T-cell (primary cell): ENCODE measurements at regions of chr1 and their contacts with region 1.

Region 1: DNA sequence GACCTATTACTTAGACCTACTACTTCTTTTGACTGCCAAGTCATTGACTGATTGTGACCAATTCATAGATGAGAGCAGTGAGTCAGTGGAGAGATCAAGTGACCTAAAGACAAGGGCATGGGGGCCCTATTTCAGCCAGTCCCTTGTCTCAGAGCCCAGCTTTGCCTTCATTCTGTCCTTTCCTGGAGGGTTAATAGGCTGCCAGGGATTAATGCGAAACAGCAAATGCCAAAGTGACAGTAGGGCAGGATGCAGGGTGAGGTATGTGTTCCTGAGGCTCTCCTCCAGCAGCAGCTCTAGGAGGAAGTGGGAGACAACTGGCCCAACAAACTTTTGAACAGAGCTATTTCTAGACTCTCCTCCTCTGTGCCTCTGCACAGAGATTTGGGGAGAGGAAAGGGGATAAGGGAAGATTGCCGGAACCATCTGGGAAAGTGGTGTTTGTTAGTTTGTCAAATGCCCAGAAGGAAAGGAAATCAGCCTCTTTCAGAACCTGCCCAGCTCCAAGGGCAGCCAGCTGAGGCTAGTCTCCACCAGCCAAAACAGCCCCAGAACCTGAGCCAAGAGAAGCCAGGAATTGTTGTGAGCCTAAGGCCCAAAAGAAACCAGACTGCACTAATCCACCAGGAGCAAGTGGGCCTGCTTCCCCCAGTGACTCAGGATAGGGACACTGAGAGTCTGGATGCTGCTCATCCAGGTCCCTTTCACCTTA is 4.9 kb upstream of the S100A3 start:
- DNase-seq: no peak
- ATAC-seq: no peak
- H3K4me3 ChIP-seq: no peak overlapping the region
- H3K4me3 Mint-ChIP-seq: no peak overlapping the region
- H3K27ac ChIP-seq: no peak overlapping the region
- H3K27ac Mint-ChIP-seq: no peak overlapping the region
- H3K4me1 ChIP-seq: no peaks in the 10 kb centered on the region
- H3K4me1 Mint-ChIP-seq: peaks cover 0 to 10% (median 3%) of the 10 kb centered on the region in 3 donors
- H3K27me3 ChIP-seq: peaks cover 0 to 3% of the 10 kb centered on the region in 2 experiments
- H3K27me3 Mint-ChIP-seq: no peaks in the 10 kb centered on the region

Region 2: DNA sequence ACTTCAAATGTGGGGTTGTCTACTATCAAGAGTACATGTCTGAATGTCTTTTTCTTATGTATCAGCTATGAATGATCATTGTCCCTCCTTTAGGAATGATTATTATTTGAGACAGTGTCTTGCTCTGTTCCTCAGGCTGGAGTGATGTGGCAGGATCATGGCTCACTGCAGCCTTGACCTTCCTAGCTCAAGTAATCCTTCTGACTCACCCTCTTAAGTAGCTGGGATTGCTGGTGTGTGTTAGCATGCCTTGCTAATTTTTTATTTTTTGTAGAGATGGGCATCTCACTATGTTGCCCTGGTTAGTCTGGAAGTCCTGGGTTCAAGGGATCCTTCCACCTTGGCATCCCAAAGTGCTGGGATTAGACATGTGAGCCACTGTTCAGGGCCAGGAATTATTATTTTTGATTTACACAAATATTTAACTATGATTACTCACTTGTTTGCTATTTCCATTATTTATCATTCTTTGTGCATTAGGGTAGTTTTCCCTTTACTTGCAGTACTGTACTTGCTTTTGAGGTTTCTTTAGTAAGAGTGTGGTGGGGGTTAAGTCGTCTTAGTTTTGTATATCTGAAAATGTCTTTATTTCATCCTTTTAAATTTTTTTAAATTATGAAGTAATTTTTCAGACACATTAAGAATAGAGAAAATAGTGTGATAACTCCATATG is 106.4 kb before region 1 on chr1:
- CTCF ChIA-PET with region 1: no interaction called
- POLR2A ChIA-PET with region 1: interaction called in 1 of 2 experiments, 13 read pairs
- DNase-seq: no peak
- ATAC-seq: no peak
- H3K4me3 ChIP-seq: no peak overlapping the region
- H3K4me3 Mint-ChIP-seq: no peak overlapping the region
- H3K27ac ChIP-seq: no peak overlapping the region
- H3K27ac Mint-ChIP-seq: no peak overlapping the region
- H3K4me1 ChIP-seq: no peaks in the 10 kb centered on the region
- H3K4me1 Mint-ChIP-seq: no peaks in the 10 kb centered on the region
- H3K27me3 ChIP-seq: peaks cover 0 to 31% of the 10 kb centered on the region in 2 experiments
- H3K27me3 Mint-ChIP-seq: peaks cover 45 to 48% of the 10 kb centered on the region in 2 donors

Region 3: GRCh38 chr1:153587314-153587713 is 33.3 kb after region 1 on chr1:
- CTCF ChIA-PET with region 1: no interaction called
- POLR2A ChIA-PET with region 1: no interaction called
- DNase-seq: no peak
- ATAC-seq: no peak
- H3K4me3 ChIP-seq: no peak overlapping the region
- H3K4me3 Mint-ChIP-seq: no peak overlapping the region
- H3K27ac ChIP-seq: no peak overlapping the region
- H3K27ac Mint-ChIP-seq: no peak overlapping the region
- H3K4me1 ChIP-seq: no peaks in the 10 kb centered on the region
- H3K4me1 Mint-ChIP-seq: no peaks in the 10 kb centered on the region
- H3K27me3 ChIP-seq: peaks cover 0 to 11% of the 10 kb centered on the region in 2 experiments
- H3K27me3 Mint-ChIP-seq: peaks cover 4 to 11% of the 10 kb centered on the region in 2 donors

Region 4: GRCh38 chr1:154493276-154493675 is 939.3 kb after region 1 on chr1:
- CTCF ChIA-PET with region 1: no interaction called
- POLR2A ChIA-PET with region 1: interaction called in 1 of 2 experiments, 12 read pairs
- DNase-seq: peak in 12 of 35 experiments; percentile 3 to 44 (median 17)
- ATAC-seq: peak; percentile 66 to 79 (median 73)
- H3K4me3 ChIP-seq: peak overlapping the region in 1 of 2 donors; percentile 30
- H3K4me3 Mint-ChIP-seq: peak overlapping the region in 2 of 3 donors; percentile 52 to 62
- H3K27ac ChIP-seq: no peak overlapping the region
- H3K27ac Mint-ChIP-seq: peak overlapping the region; percentile 65 to 85
- H3K4me1 ChIP-seq: peaks cover 27 to 33% of the 10 kb centered on the region in 2 experiments
- H3K4me1 Mint-ChIP-seq: peaks cover 41 to 47% (median 44%) of the 10 kb centered on the region in 3 donors
- H3K27me3 ChIP-seq: no peaks in the 10 kb centered on the region
- H3K27me3 Mint-ChIP-seq: no peaks in the 10 kb centered on the region